Endothelial cell of umbilical vein (primary cell): ENCODE measurements at regions of chr18 and their contacts with region 1.

Region 1: DNA sequence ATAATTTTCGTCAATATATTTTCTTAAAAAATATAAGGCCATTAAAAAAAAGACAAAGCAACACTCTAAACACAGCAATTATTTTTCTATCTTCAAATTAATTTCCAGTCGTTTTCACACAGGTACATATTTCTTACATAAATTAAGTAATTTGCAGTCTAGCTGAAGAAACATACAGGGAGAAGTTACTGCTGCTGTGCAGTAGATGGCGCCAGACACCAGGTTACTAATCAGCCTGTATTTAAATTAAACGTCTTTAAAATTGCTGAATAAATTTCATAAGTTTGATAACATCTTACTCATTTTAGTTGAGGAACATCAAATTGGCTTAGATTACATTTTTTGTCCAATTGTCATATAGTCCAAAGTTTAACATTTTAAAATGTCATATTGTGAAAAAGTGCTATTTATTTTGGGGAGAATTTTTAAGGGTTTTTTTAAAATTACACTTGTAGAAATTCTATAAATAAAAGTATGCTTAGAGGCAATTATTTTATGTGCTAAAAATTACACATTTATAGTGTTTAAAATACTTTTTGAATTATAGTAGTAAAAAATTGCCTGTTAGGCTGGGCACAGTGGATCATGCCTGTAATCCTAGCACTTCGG is 88.4 kb downstream of the PMAIP1 start:
- DNase-seq: peak; percentile 68
- H3K4me3 ChIP-seq: no peak overlapping the region
- H3K27ac ChIP-seq: no peak overlapping the region
- H3K4me1 ChIP-seq: no peaks in the 10 kb centered on the region
- H3K27me3 ChIP-seq: peaks cover 0 to 1% of the 10 kb centered on the region in 2 experiments
- CTCF ChIP-seq: peak; percentile 58 to 67
- POLR2A ChIP-seq: no peak

Region 2: DNA sequence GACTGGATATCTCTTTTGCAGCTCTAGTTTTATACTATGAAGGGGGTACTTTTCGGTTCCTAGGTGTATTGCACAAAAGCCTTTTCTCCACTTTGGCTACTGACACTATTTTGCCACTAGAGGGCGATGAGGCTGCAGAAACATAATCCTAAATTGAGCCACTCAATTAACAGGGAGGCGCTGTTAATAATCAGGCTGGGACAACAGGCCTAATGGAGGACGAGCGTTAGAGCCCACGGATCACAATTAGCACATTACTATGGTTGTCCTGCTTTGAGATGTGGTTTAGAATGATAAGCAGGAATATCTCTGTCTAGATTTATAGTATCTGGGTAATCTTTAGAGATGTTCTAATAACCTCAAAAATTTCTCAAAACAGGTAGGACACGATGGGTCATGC is 150.6 kb before region 1 on chr18:
- CTCF ChIA-PET with region 1: interaction called, 28 read pairs
- POLR2A ChIA-PET with region 1: no interaction called
- dilution Hi-C with region 1: loop called (anchors 25 kb)
- intact Hi-C with region 1: loop called (anchors 1 kb)
- DNase-seq: peak; percentile 75
- H3K4me3 ChIP-seq: no peak overlapping the region
- H3K27ac ChIP-seq: no peak overlapping the region
- H3K4me1 ChIP-seq: no peaks in the 10 kb centered on the region
- H3K27me3 ChIP-seq: peaks cover 14 to 27% of the 10 kb centered on the region in 2 experiments
- CTCF ChIP-seq: peak; percentile 82 to 83
- POLR2A ChIP-seq: no peak

Region 3: GRCh38 chr18:59918320-59918755 is 69.9 kb before region 1 on chr18:
- CTCF ChIA-PET with region 1: interaction called, 14 read pairs
- POLR2A ChIA-PET with region 1: no interaction called
- dilution Hi-C with region 1: no loop called
- intact Hi-C with region 1: no loop called
- DNase-seq: no peak
- H3K4me3 ChIP-seq: no peak overlapping the region
- H3K27ac ChIP-seq: no peak overlapping the region
- H3K4me1 ChIP-seq: peaks cover 9% of the 10 kb centered on the region
- H3K27me3 ChIP-seq: peaks cover 0 to under 1% of the 10 kb centered on the region in 2 experiments
- CTCF ChIP-seq: no peak
- POLR2A ChIP-seq: no peak

Region 4: DNA sequence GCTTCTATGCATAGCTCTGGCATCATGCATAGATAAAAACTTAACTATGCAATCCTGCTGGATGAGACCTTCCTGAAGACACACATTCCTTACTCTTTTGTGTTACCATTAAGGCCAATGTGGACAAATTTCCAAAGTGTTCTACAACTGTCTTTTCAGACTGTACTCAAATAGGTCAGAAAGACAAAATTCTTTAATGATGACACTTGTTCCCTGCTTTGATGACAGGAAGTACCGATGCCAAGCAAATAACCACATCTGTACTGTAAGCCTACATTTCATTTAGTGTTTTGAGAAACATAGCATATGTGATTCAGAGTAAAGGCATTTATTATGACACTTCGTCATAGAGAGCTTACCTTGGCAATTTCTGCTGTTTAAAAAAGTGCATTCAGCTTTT is 33.5 kb before region 1 on chr18:
- CTCF ChIA-PET with region 1: interaction called, 16 read pairs
- POLR2A ChIA-PET with region 1: no interaction called
- dilution Hi-C with region 1: no loop called
- intact Hi-C with region 1: no loop called
- DNase-seq: no peak
- H3K4me3 ChIP-seq: no peak overlapping the region
- H3K27ac ChIP-seq: no peak overlapping the region
- H3K4me1 ChIP-seq: no peaks in the 10 kb centered on the region
- H3K27me3 ChIP-seq: no peaks in the 10 kb centered on the region
- CTCF ChIP-seq: no peak
- POLR2A ChIP-seq: no peak

Region 5: GRCh38 chr18:59966913-59967312 is 21.3 kb before region 1 on chr18:
- CTCF ChIA-PET with region 1: interaction called, 14 read pairs
- POLR2A ChIA-PET with region 1: no interaction called
- dilution Hi-C with region 1: no loop called
- intact Hi-C with region 1: no loop called
- DNase-seq: no peak
- H3K4me3 ChIP-seq: no peak overlapping the region
- H3K27ac ChIP-seq: no peak overlapping the region
- H3K4me1 ChIP-seq: no peaks in the 10 kb centered on the region
- H3K27me3 ChIP-seq: peaks cover 22 to 39% of the 10 kb centered on the region in 2 experiments
- CTCF ChIP-seq: no peak
- POLR2A ChIP-seq: no peak

Region 6: GRCh38 chr18:60554967-60555366 is 566.8 kb after region 1 on chr18:
- CTCF ChIA-PET with region 1: interaction called, 82 read pairs
- POLR2A ChIA-PET with region 1: no interaction called
- dilution Hi-C with region 1: no loop called
- intact Hi-C with region 1: no loop called
- DNase-seq: no peak
- H3K4me3 ChIP-seq: no peak overlapping the region
- H3K27ac ChIP-seq: no peak overlapping the region
- H3K4me1 ChIP-seq: no peaks in the 10 kb centered on the region
- H3K27me3 ChIP-seq: no peaks in the 10 kb centered on the region
- CTCF ChIP-seq: no peak
- POLR2A ChIP-seq: no peak

Region 7: GRCh38 chr18:61502472-61502871 is 1514.3 kb after region 1 on chr18:
- CTCF ChIA-PET with region 1: interaction called, 19 read pairs
- POLR2A ChIA-PET with region 1: no interaction called
- dilution Hi-C with region 1: no loop called
- intact Hi-C with region 1: loop called (anchors 1 kb)
- DNase-seq: peak; percentile 65
- H3K4me3 ChIP-seq: no peak overlapping the region
- H3K27ac ChIP-seq: no peak overlapping the region
- H3K4me1 ChIP-seq: no peaks in the 10 kb centered on the region
- H3K27me3 ChIP-seq: peaks cover 0 to 2% of the 10 kb centered on the region in 2 experiments
- CTCF ChIP-seq: peak; percentile 58 to 64
- POLR2A ChIP-seq: no peak